H1 (cell line): ENCODE measurements at regions of chr6 and their contacts with region 1.

Region 1: GRCh38 chr6:158972241-158973233 is 27.5 kb downstream of the RSPH3 start:
- DNase-seq: no peak
- H3K4me3 ChIP-seq: no peak overlapping the region
- H3K27ac ChIP-seq: no peak overlapping the region
- H3K4me1 ChIP-seq: no peaks in the 10 kb centered on the region
- H3K27me3 ChIP-seq: no peaks in the 10 kb centered on the region
- CTCF ChIP-seq: peak in 2 of 3 experiments; percentile 20 to 36; a peak in 2 of 4 replicates
- EP300 ChIP-seq: no peak
- POLR2A ChIP-seq: no peak
- RAD21 ChIP-seq: peak; percentile 84 to 91

Region 2: GRCh38 chr6:158660333-158660754 is 312.2 kb before region 1 on chr6:
- CTCF ChIA-PET with region 1: interaction called, 15 read pairs
- POLR2A ChIA-PET with region 1: no interaction called
- DNase-seq: peak in 1 of 2 experiments; percentile 61
- H3K4me3 ChIP-seq: no peak overlapping the region
- H3K27ac ChIP-seq: no peak overlapping the region
- H3K4me1 ChIP-seq: peaks cover 0 to 8% (median 4%) of the 10 kb centered on the region in 4 experiments; a peak in 4 of 7 replicates
- H3K27me3 ChIP-seq: no peaks in the 10 kb centered on the region; a peak in 1 of 7 replicates
- CTCF ChIP-seq: peak; percentile 52 to 69 (median 67)
- EP300 ChIP-seq: no peak
- POLR2A ChIP-seq: no peak
- RAD21 ChIP-seq: peak; percentile 61 to 70

Region 3: DNA sequence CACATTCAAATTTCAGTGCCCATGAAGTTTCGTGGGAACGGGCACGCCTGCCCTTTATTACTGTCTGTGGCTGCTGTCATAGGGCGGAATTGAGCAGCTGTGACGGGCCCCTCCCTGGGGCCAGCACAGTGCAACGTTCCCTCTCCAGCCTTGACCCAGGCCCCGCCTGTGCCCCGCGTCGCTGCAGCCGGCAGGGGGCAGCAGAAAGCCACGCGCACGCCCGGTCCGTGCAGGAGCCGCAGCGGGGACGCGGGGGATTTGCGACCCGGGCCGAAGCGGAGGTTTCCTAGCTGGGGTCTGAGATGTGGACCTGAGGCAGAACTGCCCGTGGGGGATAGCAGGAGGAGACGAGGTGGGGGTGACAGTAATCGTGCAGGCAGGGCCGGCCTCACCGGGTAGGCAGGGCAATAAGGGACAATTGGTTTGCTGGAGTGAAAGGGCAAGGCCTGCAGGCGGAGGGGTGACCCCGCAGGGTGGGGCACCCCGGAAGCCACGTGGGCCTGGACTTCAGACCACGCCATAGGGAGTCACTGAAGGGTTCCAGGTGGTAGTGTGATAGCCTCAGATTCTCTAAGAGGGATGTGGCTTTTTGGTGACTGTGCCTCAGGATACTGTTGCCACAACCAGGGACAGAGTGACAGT is 268.2 kb before region 1 on chr6:
- CTCF ChIA-PET with region 1: interaction called, 42 read pairs
- POLR2A ChIA-PET with region 1: no interaction called
- DNase-seq: peak; percentile 41 to 97
- H3K4me3 ChIP-seq: peak overlapping the region in 3 of 4 experiments; percentile 4 to 46 (median 19); a peak in 3 of 8 replicates
- H3K27ac ChIP-seq: no peak overlapping the region
- H3K4me1 ChIP-seq: peaks cover 0 to 4% (median 1%) of the 10 kb centered on the region in 4 experiments; a peak in 1 of 7 replicates
- H3K27me3 ChIP-seq: no peaks in the 10 kb centered on the region
- CTCF ChIP-seq: peak; percentile 93 to 94 (median 94)
- EP300 ChIP-seq: no peak
- POLR2A ChIP-seq: no peak
- RAD21 ChIP-seq: peak; percentile 95

Region 4: GRCh38 chr6:158769771-158770432 is 202.6 kb before region 1 on chr6:
- CTCF ChIA-PET with region 1: interaction called, 14 read pairs
- POLR2A ChIA-PET with region 1: no interaction called
- DNase-seq: no peak
- H3K4me3 ChIP-seq: no peak overlapping the region
- H3K27ac ChIP-seq: no peak overlapping the region
- H3K4me1 ChIP-seq: peaks cover 0 to 5% (median 0%) of the 10 kb centered on the region in 4 experiments; a peak in 2 of 7 replicates
- H3K27me3 ChIP-seq: no peaks in the 10 kb centered on the region
- CTCF ChIP-seq: no peak
- EP300 ChIP-seq: no peak
- POLR2A ChIP-seq: no peak
- RAD21 ChIP-seq: no peak

Region 5: GRCh38 chr6:158793432-158793831 is 179.1 kb before region 1 on chr6:
- CTCF ChIA-PET with region 1: interaction called, 54 read pairs
- POLR2A ChIA-PET with region 1: no interaction called
- DNase-seq: no peak
- H3K4me3 ChIP-seq: no peak overlapping the region
- H3K27ac ChIP-seq: no peak overlapping the region
- H3K4me1 ChIP-seq: peaks cover 0 to 9% (median 5%) of the 10 kb centered on the region in 4 experiments; a peak in 6 of 7 replicates
- H3K27me3 ChIP-seq: no peaks in the 10 kb centered on the region
- CTCF ChIP-seq: peak in 2 of 3 experiments; percentile 30 to 57; a peak in 3 of 4 replicates
- EP300 ChIP-seq: no peak
- POLR2A ChIP-seq: no peak
- RAD21 ChIP-seq: peak; percentile 66 to 72

Region 6: DNA sequence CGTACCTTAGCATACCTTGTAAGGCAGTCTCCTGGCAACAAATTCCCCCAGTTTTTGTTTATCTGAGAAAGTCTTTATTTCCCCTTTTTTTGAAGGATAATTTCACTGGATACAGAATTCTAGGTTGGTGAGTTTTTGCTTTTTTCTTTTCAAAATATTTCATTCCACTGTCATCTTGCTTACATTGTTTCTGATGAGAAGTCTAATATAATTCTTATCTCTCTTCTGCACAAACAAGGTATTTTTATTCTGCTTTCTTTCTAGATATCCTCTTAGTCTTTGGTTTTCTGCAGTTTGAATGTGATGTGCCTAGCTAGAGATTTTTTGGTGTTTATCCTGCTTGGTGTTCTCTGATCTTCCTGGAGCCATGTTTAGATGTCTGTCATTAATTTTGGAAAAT is 95.7 kb before region 1 on chr6:
- CTCF ChIA-PET with region 1: no interaction called
- POLR2A ChIA-PET with region 1: no interaction called
- DNase-seq: no peak
- H3K4me3 ChIP-seq: no peak overlapping the region
- H3K27ac ChIP-seq: no peak overlapping the region
- H3K4me1 ChIP-seq: peaks cover 0 to 10% (median 4%) of the 10 kb centered on the region in 4 experiments; a peak in 4 of 7 replicates
- H3K27me3 ChIP-seq: no peaks in the 10 kb centered on the region
- CTCF ChIP-seq: no peak
- EP300 ChIP-seq: no peak
- POLR2A ChIP-seq: no peak
- RAD21 ChIP-seq: no peak

Region 7: GRCh38 chr6:158910484-158911348 is 61.8 kb before region 1 on chr6:
- CTCF ChIA-PET with region 1: interaction called, 10 read pairs
- POLR2A ChIA-PET with region 1: no interaction called
- DNase-seq: peak in 1 of 2 experiments; percentile 82
- H3K4me3 ChIP-seq: peak overlapping the region in 2 of 4 experiments; percentile 8 to 41; a peak in 4 of 8 replicates
- H3K27ac ChIP-seq: peak overlapping the region; percentile 74
- H3K4me1 ChIP-seq: peaks cover 3 to 28% (median 11%) of the 10 kb centered on the region in 4 experiments
- H3K27me3 ChIP-seq: no peaks in the 10 kb centered on the region
- CTCF ChIP-seq: peak in 2 of 3 experiments; percentile 13 to 37; a peak in 2 of 4 replicates
- EP300 ChIP-seq: peak in 1 of 2 experiments; percentile 91; a peak in 1 of 3 replicates
- POLR2A ChIP-seq: peak; percentile 49 to 70
- RAD21 ChIP-seq: peak; percentile 29 to 54; a peak in 3 of 4 replicates

Region 8: DNA sequence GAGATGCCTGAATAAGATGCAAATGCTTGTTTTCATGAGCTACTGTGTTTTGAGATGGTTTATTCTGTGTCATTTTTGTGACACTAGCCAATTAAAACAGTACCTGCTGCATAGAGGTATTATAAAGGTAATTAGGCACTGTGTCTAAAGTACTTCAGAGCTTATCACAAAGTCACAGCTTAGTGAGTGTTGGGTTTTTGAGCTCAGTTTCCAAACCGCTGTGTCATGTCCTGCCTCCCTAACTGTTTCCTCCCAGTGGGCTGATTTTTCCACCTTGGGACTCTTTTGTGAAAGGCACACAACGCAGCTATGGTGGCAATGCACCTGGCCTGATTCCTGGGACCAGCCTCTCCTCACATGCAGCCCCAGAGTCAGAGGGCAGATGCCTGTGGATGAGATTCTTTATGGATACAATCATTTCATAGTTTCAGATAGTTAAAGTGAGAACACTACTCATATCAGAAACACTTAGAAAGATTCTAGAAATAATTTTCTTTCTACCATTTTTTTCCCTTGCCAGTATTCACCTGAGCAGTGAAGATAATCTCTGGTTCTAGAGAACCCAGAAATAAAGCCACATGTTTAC is 113.6 kb after region 1 on chr6:
- CTCF ChIA-PET with region 1: no interaction called
- POLR2A ChIA-PET with region 1: no interaction called
- DNase-seq: no peak
- H3K4me3 ChIP-seq: no peak overlapping the region
- H3K27ac ChIP-seq: no peak overlapping the region
- H3K4me1 ChIP-seq: no peaks in the 10 kb centered on the region
- H3K27me3 ChIP-seq: no peaks in the 10 kb centered on the region
- CTCF ChIP-seq: no peak
- EP300 ChIP-seq: no peak
- POLR2A ChIP-seq: no peak
- RAD21 ChIP-seq: no peak

Region 9: GRCh38 chr6:159151266-159151855 is 178.8 kb after region 1 on chr6:
- CTCF ChIA-PET with region 1: no interaction called
- POLR2A ChIA-PET with region 1: no interaction called
- DNase-seq: no peak
- H3K4me3 ChIP-seq: no peak overlapping the region
- H3K27ac ChIP-seq: no peak overlapping the region
- H3K4me1 ChIP-seq: no peaks in the 10 kb centered on the region
- H3K27me3 ChIP-seq: no peaks in the 10 kb centered on the region
- CTCF ChIP-seq: peak; percentile 61 to 71 (median 63)
- EP300 ChIP-seq: no peak
- POLR2A ChIP-seq: no peak
- RAD21 ChIP-seq: peak; percentile 27 to 49; a peak in 3 of 4 replicates

Region 10: DNA sequence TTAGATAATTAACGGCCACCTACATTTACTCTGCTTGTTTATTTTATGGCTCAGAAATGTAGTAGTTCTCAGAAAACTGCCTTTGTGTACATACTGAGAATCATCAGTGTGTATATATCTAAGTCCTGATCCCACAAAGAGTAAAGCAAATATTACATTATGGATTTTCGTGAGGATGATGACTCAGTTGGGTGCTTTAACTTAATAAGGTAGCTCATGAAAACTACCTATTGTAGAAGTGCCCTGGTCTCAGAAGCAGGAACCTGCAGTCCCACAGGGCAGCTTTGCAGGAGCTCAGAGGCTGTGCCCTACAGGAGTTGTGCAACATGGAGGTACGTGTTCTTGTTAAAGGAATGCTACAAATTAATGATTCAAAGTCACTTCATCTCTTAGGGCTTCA is 1837.7 kb after region 1 on chr6:
- CTCF ChIA-PET with region 1: no interaction called
- POLR2A ChIA-PET with region 1: no interaction called
- DNase-seq: no peak
- H3K4me3 ChIP-seq: no peak overlapping the region
- H3K27ac ChIP-seq: no peak overlapping the region
- H3K4me1 ChIP-seq: no peaks in the 10 kb centered on the region
- H3K27me3 ChIP-seq: no peaks in the 10 kb centered on the region; a peak in 1 of 7 replicates
- CTCF ChIP-seq: no peak
- EP300 ChIP-seq: no peak
- POLR2A ChIP-seq: no peak
- RAD21 ChIP-seq: no peak